Right ventricle myocardium inferior (tissue), 1 donor: ENCODE measurements at regions of chr18 and their contacts with region 1.

Region 1: GRCh38 chr18:64416990-64417389 is 268.1 kb upstream of the LINC00305 start:
- DNase-seq: no peak
- ATAC-seq: no peak

Region 2: GRCh38 chr18:64330161-64330560 is 86.8 kb before region 1 on chr18:
- intact Hi-C with region 1: no loop called
- DNase-seq: no peak
- ATAC-seq: no peak

Region 3: GRCh38 chr18:65082907-65083306 is 665.9 kb after region 1 on chr18:
- intact Hi-C with region 1: loop called (anchors 10 kb)
- DNase-seq: no peak
- ATAC-seq: no peak